Thyroid gland (tissue), 4 donors: ENCODE measurements at regions of chr22 and their contacts with region 1.

Region 1: GRCh38 chr22:39170825-39171622 is 18.5 kb upstream of the CBX7 start:
- DNase-seq: peak; percentile 75 to 80
- H3K4me3 ChIP-seq: no peak overlapping the region
- H3K27ac ChIP-seq: no peak overlapping the region
- H3K4me1 ChIP-seq: peaks cover 28 to 42% of the 10 kb centered on the region in 2 donors
- H3K27me3 ChIP-seq: no peaks in the 10 kb centered on the region
- CTCF ChIP-seq: peak; percentile 92 to 97 (median 96)
- POLR2A ChIP-seq: no peak

Region 2: GRCh38 chr22:39068033-39068791 is 102.8 kb before region 1 on chr22:
- intact Hi-C with region 1: no loop called
- DNase-seq: peak in 1 of 2 donors; percentile 20
- H3K4me3 ChIP-seq: no peak overlapping the region
- H3K27ac ChIP-seq: no peak overlapping the region
- H3K4me1 ChIP-seq: no peaks in the 10 kb centered on the region
- H3K27me3 ChIP-seq: no peaks in the 10 kb centered on the region
- CTCF ChIP-seq: no peak
- POLR2A ChIP-seq: no peak

Region 3: DNA sequence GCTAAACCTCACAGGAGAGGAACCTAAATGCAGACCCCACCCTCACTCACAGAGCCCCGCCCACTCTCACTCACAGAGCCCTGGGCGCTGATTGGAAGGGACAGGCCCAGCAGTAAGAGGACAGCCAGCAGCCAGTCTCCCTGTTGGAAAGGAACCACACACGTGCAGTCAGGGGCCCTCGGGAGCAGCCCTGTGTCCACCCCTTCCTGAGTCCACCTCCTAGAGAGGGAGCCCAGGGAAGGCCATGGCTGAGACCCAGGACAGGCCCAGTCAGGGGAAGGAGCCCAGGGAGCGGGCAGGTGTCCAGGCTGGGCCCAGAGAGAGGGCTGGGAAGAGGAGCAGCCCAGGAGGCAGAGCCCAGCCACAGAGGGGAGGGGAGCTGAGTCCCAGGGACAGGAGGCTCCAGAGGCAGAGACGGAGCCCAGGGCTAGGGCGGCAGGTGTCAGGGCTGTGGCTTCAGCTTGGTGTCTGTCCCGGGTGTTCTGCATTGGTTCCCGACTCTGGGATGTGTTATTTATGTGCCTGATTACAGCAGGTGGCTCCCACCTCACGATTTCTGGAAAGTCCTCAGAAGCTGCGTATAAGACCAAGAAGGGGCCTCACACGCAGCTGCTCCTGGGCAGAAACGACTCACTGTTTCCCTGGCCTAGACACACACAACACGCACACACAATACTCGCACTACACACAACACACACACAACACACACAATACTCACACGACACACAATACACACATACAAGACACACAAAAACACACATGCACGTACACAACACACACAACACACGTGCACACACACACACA is 82.9 kb before region 1 on chr22:
- intact Hi-C with region 1: no loop called
- DNase-seq: peak; percentile 75 to 77
- H3K4me3 ChIP-seq: no peak overlapping the region
- H3K27ac ChIP-seq: no peak overlapping the region
- H3K4me1 ChIP-seq: peaks cover 0 to 4% of the 10 kb centered on the region in 2 donors
- H3K27me3 ChIP-seq: no peaks in the 10 kb centered on the region
- CTCF ChIP-seq: no peak
- POLR2A ChIP-seq: no peak

Region 4: GRCh38 chr22:39306581-39307361 is 135.7 kb after region 1 on chr22:
- intact Hi-C with region 1: loop called (anchors 1 kb)
- DNase-seq: no peak
- H3K4me3 ChIP-seq: no peak overlapping the region
- H3K27ac ChIP-seq: no peak overlapping the region
- H3K4me1 ChIP-seq: no peaks in the 10 kb centered on the region
- H3K27me3 ChIP-seq: no peaks in the 10 kb centered on the region
- CTCF ChIP-seq: peak in 3 of 6 experiments; percentile 13 to 18 (median 13)
- POLR2A ChIP-seq: no peak

Region 5: GRCh38 chr22:39502109-39502788 is 331.2 kb after region 1 on chr22 and contains the start of gene MIEF1:
- intact Hi-C with region 1: loop called (anchors 10 kb)
- DNase-seq: peak; percentile 98
- H3K4me3 ChIP-seq: peak within 1 kb of the TSS; percentile 54 to 90 (median 83)
- H3K27ac ChIP-seq: peak within 1 kb of the TSS; percentile 82 to 94 (median 89)
- H3K4me1 ChIP-seq: peaks cover 22 to 32% of the 10 kb centered on the region in 2 donors
- H3K27me3 ChIP-seq: no peaks in the 10 kb centered on the region
- CTCF ChIP-seq: no peak
- POLR2A ChIP-seq: peak in 1 of 2 donors; percentile 62
- total RNA-seq, gene MIEF1: 21.4 to 30.5 (median 26.7) TPM